MCF 10A (cell line): ENCODE measurements at regions of chr19 and their contacts with region 1.

Region 1: GRCh38 chr19:35545001-35545911 is at the start of gene TMEM147:
- DNase-seq: peak; percentile 90
- H3K4me3 Mint-ChIP-seq: peak within 1 kb of the TSS; percentile 89
- H3K27ac Mint-ChIP-seq: peak within 1 kb of the TSS; percentile 92
- H3K4me1 Mint-ChIP-seq: peaks cover 34% of the 10 kb centered on the region
- H3K27me3 Mint-ChIP-seq: no peaks in the 10 kb centered on the region
- CTCF ChIP-seq: no peak
- total RNA-seq, gene TMEM147: 110 and 123 TPM in 2 replicates

Region 2: GRCh38 chr19:35449053-35449687 is 96.1 kb before region 1 on chr19:
- CTCF ChIA-PET with region 1: no interaction called
- POLR2A ChIA-PET with region 1: no interaction called
- intact Hi-C with region 1: no loop called
- DNase-seq: peak; percentile 9
- H3K4me3 Mint-ChIP-seq: no peak overlapping the region
- H3K27ac Mint-ChIP-seq: no peak overlapping the region
- H3K4me1 Mint-ChIP-seq: no peaks in the 10 kb centered on the region
- H3K27me3 Mint-ChIP-seq: peaks cover 88% of the 10 kb centered on the region
- CTCF ChIP-seq: no peak

Region 3: DNA sequence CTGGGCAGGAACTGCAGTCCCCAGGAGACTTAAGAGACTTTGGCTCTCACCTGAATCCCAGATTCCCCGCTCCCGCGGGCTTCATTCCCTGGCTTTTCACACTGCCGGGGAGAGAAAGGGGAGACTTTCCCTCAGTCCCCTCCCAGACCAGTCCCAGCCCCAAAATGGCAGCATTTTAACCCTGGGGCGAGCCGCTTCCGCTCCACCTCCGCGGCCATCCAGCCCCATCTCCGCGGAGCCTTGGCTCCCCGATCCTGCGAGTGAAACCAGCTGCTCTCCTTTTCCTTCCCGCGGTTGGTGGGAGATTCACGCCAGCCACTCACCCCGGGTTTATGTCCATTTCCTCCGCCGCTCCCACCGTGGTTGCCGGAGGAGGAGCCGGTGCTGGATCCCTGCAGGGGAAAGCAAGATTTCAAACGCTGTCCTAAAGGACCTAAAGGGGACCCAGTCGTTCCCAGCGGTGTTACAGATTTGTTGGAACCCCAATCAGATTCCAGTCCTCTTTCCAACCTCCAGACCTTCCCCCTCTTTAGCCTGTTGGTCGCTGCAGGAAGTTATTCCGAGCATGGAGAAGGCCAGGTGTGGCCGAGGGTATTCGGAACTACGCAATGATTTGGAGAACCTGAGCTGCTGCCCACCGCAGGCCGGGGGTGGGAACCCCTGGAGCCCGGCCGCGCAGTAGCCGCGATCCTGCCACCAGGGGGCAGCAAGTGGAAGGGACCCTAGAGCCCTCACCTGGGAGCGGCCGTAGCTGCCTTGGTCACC is 35.2 kb before region 1 on chr19:
- CTCF ChIA-PET with region 1: interaction called, 30 read pairs
- POLR2A ChIA-PET with region 1: interaction called, 4 read pairs
- intact Hi-C with region 1: loop called (anchors 1 kb)
- DNase-seq: peak; percentile 88
- H3K4me3 Mint-ChIP-seq: peak overlapping the region; percentile 74
- H3K27ac Mint-ChIP-seq: peak overlapping the region; percentile 75
- H3K4me1 Mint-ChIP-seq: peaks cover 15% of the 10 kb centered on the region
- H3K27me3 Mint-ChIP-seq: no peaks in the 10 kb centered on the region
- CTCF ChIP-seq: peak; percentile 93

Region 4: GRCh38 chr19:35559281-35559659 is 14.0 kb after region 1 on chr19:
- CTCF ChIA-PET with region 1: interaction called, 15 read pairs
- POLR2A ChIA-PET with region 1: interaction called, 3 read pairs
- intact Hi-C with region 1: no loop called
- DNase-seq: no peak
- H3K4me3 Mint-ChIP-seq: no peak overlapping the region
- H3K27ac Mint-ChIP-seq: no peak overlapping the region
- H3K4me1 Mint-ChIP-seq: no peaks in the 10 kb centered on the region
- H3K27me3 Mint-ChIP-seq: peaks cover 41% of the 10 kb centered on the region
- CTCF ChIP-seq: no peak

Region 5: DNA sequence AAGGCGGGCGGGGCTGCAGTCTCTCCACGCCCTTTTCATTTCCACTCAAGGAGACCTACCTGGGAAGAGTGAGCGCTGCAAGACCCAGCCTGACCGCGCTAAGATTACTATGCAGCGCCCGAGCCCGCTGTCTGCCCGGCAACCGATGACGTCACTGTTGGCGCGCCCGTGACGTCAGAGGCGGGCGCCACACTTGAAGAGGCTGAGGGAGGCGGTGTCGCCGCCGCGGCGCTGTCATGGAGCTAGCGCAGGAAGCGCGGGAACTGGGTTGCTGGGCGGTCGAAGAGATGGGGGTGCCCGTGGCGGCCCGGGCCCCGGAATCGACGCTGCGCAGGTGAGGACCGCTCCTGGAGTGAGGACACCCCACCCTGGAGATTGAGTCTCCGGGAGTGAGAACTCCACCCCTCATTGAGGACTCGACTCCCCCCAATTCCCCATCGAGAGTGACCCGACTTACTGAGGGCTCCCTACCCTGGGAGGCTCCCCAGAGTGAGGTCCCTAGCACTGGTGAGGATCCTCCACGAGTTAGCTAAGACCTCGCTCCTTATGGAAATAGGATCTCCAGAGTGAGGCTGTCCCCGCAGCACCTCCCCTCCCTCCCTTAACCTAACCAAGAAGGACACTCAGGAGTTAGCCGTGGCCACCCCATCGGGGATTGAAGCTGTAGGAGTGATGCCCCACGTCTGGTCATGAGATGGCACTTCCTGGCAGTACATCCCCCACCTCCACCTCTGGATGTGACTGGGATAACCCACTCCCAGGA is 67.5 kb after region 1 on chr19 and contains the start of gene HAUS5:
- CTCF ChIA-PET with region 1: interaction called, 17 read pairs
- POLR2A ChIA-PET with region 1: interaction called, 7 read pairs
- intact Hi-C with region 1: no loop called
- DNase-seq: peak; percentile 92
- H3K4me3 Mint-ChIP-seq: peak within 1 kb of the TSS; percentile 82
- H3K27ac Mint-ChIP-seq: peak within 1 kb of the TSS; percentile 81
- H3K4me1 Mint-ChIP-seq: no peaks in the 10 kb centered on the region
- H3K27me3 Mint-ChIP-seq: no peaks in the 10 kb centered on the region
- CTCF ChIP-seq: no peak
- total RNA-seq, gene HAUS5: 6.3 and 10.6 TPM in 2 replicates

Region 6: DNA sequence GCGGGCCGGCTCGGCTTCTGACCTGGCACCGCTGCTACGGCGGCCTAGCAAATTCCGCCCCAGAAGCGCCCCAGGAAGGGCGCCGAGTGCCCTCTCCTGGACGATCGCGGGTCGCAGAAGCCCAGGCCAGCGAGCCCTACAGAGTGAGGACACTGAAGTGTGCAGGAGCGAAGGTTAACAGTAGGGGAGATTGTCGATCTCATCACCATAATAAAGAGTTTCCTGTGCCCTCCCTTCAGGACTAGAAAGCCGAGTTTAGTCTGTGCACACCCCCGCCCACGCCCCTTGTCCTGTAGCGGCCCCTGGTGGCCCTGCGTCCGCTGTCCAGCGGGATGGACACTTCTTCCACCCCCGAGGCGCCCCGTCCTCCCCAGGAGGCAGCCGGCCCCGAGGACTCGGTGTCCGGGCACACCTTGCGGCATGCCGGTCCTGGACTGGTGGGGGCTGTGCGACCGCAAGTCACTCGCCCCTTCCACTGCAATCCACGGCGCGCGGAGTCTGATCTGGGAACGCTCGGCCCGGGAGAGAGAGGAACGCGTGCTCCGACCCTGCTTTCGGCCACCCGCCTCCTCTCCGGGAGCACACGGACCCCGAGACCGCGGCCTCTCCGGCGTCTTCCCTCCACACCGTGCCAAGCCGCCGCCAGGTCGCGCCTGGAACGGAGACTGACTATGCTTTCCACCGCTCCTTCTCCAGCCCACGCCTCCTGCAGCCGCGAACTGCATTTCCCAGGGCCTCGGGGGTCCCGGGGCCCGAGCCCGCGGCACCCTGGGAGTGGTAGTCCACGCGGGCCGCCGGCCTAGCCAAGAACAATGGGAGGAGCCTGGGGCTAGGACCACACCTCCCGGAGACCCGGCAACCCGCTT is 171.8 kb after region 1 on chr19:
- CTCF ChIA-PET with region 1: interaction called, 10 read pairs
- POLR2A ChIA-PET with region 1: interaction called, 3 read pairs
- intact Hi-C with region 1: loop called (anchors 1 kb)
- DNase-seq: peak; percentile 97
- H3K4me3 Mint-ChIP-seq: peak overlapping the region; percentile 88
- H3K27ac Mint-ChIP-seq: peak overlapping the region; percentile 97
- H3K4me1 Mint-ChIP-seq: peaks cover 20% of the 10 kb centered on the region
- H3K27me3 Mint-ChIP-seq: no peaks in the 10 kb centered on the region
- CTCF ChIP-seq: peak; percentile 86